Right ventricle myocardium inferior (tissue), 1 donor: ENCODE measurements at regions of chr10 and their contacts with region 1.

Region 1: DNA sequence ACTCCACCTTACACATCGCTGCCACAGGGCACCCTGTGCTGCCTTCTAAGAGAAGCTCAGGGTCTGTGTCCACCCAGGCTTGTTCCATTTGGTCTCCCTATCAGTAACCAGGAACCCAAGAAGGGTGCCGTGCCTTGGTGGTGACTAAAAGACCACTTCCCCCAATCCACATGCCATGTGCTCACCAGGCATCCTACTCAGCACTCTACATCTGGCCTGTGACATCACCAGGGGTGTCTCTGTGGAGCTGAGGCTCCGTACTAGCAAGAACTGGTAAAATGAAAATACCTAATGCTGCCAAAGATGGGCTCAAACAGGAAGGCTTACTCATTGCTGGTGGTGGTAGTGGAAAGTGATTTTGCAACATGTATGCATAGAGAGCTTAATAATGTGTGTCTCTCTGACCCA is 19.0 kb upstream of the C10orf71 start:
- DNase-seq: no peak
- ATAC-seq: no peak

Region 2: GRCh38 chr10:49225218-49225876 is 54.7 kb before region 1 on chr10:
- intact Hi-C with region 1: loop called (anchors 5 kb)
- DNase-seq: peak; percentile 66
- ATAC-seq: peak; percentile 69